Right ventricle myocardium superior (tissue), 1 donor: ENCODE measurements at regions of chr16 and their contacts with region 1.

Region 1: DNA sequence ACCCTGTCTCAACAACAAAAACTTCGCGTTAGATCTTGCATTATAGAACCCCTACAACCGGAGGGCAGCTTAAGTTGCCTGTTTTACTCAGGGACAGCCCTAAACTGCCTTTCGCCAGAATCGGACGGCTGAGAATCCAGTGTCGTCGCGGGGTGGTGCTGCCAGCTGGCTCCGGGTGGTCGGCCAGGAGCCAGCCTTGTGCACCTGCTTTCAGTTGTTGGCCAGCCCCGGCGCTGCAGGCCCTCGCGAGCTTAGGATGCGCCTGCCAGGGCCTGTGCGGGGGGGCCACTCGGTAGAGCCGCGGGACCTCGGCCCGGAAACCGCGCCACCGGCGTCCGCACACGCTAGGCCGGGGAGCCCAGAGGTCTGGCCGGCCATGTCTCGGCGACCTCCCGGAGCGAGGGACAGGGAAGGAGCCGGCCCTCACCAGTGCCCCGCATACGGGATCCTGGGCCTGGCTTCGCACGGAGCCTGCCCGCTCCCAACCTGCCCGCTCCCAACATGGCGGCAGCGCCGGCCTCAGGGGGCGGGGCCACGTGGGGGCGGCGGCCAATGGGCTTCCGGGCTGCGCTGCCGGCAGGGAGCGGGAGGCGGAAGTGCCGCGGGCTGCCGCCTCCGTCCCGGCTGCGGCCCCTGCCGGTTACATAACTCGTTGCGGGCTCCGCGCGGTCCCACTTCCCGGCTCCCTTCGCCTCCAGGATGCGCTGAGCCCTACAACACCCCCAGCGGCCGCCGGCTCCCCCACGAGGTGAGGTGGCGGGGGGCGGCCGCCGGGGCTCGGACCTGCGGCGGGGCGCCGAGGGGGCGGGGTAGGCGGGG is 14.2 kb downstream of the NAA60 start:
- DNase-seq: peak; percentile 95
- ATAC-seq: peak; percentile 91

Region 2: GRCh38 chr16:3264137-3265036 is 193.3 kb before region 1 on chr16:
- intact Hi-C with region 1: loop called (anchors 5 kb)
- DNase-seq: peak; percentile 98
- ATAC-seq: peak; percentile 96